HEK293T (cell line): ENCODE measurements at regions of chr6 and their contacts with region 1.

Region 1: DNA sequence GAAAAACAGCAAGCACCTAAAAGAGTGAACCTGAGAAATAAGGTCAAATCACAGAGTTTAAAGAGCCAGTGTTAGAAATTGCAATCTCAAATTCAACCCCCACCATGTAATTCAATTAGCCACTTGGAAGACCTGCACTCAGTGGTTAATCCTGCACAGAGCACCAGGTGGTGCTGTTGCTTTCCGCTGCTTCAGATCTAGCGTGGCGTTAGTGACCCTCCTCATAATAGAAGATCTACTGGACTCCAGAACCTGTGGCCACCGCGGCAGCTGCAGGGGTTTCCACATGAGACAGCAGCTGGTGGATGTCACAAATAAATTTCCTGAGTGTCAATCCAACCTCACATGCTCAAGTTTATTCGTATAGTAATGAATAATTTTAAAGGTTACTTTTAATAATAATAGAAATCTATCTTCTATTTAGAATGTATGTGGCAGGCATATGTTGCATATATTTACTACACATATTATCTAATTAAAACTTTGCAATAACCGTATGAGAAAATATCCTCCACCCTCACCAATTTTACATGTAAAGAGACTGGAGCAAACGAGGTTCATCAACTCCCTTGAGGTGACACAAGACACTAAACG is 84.4 kb downstream of the SYNE1 start:
- DNase-seq: peak; percentile 77

Region 2: DNA sequence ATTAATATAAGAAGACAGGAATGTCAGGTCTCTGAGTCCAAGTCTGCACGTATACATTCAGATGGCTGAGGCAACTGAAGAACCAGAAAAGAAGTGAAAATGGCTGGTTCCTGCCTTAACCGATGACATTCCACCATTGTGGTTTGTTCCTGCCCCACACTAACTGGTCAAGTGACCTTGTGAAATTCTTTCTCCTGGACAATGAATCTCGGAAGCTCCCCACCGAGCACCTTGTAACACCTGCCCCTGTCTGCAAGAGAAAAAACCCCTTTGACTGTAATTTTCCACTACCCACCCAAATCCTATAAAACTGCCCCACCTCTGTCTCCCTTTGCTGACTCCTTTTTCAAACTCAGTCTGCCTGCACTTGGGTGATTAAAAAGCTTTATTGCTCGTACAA is 56.0 kb before region 1 on chr6:
- CTCF ChIA-PET with region 1: no interaction called
- POLR2A ChIA-PET with region 1: no interaction called
- DNase-seq: no peak

Region 3: DNA sequence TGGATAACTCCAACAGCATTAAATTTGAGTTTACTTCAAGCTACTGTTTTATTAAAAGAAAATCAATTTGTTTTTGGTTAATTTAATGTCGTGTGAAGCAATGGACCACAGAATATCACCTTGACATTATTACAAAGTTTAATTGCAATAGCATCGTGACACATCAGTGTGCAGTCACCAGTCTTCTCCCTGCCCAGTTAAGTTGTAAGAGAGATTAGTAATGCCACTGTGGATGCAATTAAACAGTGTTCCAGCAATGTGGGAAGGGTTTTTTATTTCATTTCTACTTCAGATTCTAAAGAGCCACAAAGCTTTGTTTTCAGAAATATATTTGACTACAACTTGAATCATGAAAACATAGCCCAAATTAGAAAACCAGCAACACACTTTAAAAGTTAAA is 44.2 kb before region 1 on chr6:
- CTCF ChIA-PET with region 1: no interaction called
- POLR2A ChIA-PET with region 1: no interaction called
- DNase-seq: no peak

Region 4: GRCh38 chr6:152642989-152643388 is 90.3 kb after region 1 on chr6:
- CTCF ChIA-PET with region 1: interaction called, 10 read pairs
- POLR2A ChIA-PET with region 1: no interaction called
- DNase-seq: peak; percentile 72